ENCODE measurements at regions of chr12 and their contacts with region 1.

Region 1: DNA sequence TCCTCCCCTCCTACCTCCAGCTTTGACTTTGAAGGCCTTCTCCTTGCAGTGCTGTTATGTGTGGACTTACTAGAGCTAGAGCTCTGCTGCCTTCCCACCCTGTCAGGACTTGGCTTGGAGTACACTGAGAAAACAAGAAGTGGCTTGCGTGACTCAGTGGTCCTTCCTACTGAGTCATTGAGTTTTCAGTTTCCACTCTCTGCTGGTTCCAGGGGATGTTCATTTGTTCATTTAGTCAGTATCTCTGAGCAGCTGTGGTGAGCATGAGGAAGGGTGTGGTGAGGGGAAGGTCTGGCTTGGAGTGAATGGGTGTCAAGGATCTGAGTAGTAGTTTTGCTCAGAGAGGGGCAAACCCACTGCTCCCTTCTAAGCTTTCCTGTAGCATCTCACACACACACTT is 17.2 kb upstream of the ELK3 start:
- DNase-seq: peak; percentile 63
- H3K4me3 Mint-ChIP-seq: peak overlapping the region; percentile 5
- H3K27ac Mint-ChIP-seq: peak overlapping the region; percentile 87
- H3K4me1 Mint-ChIP-seq: peaks cover 27% of the 10 kb centered on the region
- H3K27me3 Mint-ChIP-seq: no peaks in the 10 kb centered on the region

Region 2: DNA sequence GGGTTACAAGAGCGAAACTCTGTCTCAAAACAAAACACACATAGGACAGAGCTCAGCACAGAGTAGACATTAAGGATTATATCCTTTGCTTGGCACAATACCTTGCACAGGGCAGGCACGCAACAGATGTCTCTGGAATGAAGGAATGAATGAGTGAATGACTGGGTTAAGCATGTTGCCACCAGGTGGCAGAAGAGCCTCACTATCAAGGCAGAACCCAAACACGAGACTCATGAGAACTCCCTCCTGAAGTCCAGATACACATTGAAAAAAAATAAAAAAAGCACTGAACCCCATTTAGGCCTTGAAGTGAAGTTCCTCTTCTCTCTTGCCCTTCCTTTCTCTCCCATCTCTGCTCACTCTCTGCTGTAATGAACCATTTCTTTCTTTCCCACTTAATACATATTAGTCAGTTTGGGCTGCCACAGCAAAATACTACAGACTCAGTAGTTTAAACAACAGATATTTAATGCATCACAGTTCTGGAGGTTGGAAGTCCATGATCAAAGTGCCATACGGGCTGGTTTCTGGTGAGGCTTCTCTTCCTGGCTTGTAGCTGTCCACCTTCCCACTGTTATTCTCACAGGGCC is 115.1 kb before region 1 on chr12:
- intact Hi-C with region 1: loop called (anchors 1 kb)
- DNase-seq: peak; percentile 58
- H3K4me3 Mint-ChIP-seq: no peak overlapping the region
- H3K27ac Mint-ChIP-seq: no peak overlapping the region
- H3K4me1 Mint-ChIP-seq: peaks cover 27% of the 10 kb centered on the region
- H3K27me3 Mint-ChIP-seq: no peaks in the 10 kb centered on the region

Region 3: DNA sequence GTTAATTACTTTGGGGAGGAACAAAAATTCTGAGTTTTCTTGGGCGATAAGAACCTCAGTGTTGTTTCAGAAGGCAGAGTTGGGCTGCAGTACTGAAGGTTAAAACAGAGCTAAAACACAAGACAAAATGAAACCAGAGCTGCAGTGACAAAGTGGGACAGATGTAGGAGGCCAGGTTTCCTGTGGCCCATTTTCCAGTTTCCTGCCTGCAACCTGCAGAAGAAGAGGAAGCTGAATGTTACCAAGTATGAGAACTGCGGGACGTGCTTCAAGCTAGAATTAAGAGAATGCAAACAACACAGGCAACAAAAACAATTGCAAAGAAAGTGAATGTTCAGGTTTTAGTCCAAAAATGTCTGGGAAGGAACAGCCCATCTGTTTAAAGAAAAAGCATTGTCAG is 35.0 kb after region 1 on chr12:
- intact Hi-C with region 1: loop called (anchors 1 kb)
- DNase-seq: no peak
- H3K4me3 Mint-ChIP-seq: peak overlapping the region; percentile 76
- H3K27ac Mint-ChIP-seq: peak overlapping the region; percentile 76
- H3K4me1 Mint-ChIP-seq: peaks cover 78% of the 10 kb centered on the region
- H3K27me3 Mint-ChIP-seq: no peaks in the 10 kb centered on the region

Region 4: GRCh38 chr12:96445691-96446583 is 268.9 kb after region 1 on chr12:
- intact Hi-C with region 1: loop called (anchors 5 kb)
- DNase-seq: peak; percentile 70
- H3K4me3 Mint-ChIP-seq: peak overlapping the region; percentile 48
- H3K27ac Mint-ChIP-seq: peak overlapping the region; percentile 96
- H3K4me1 Mint-ChIP-seq: peaks cover 51% of the 10 kb centered on the region
- H3K27me3 Mint-ChIP-seq: no peaks in the 10 kb centered on the region